ENCODE measurements at regions of chr5 and their contacts with region 1.

Region 1: DNA sequence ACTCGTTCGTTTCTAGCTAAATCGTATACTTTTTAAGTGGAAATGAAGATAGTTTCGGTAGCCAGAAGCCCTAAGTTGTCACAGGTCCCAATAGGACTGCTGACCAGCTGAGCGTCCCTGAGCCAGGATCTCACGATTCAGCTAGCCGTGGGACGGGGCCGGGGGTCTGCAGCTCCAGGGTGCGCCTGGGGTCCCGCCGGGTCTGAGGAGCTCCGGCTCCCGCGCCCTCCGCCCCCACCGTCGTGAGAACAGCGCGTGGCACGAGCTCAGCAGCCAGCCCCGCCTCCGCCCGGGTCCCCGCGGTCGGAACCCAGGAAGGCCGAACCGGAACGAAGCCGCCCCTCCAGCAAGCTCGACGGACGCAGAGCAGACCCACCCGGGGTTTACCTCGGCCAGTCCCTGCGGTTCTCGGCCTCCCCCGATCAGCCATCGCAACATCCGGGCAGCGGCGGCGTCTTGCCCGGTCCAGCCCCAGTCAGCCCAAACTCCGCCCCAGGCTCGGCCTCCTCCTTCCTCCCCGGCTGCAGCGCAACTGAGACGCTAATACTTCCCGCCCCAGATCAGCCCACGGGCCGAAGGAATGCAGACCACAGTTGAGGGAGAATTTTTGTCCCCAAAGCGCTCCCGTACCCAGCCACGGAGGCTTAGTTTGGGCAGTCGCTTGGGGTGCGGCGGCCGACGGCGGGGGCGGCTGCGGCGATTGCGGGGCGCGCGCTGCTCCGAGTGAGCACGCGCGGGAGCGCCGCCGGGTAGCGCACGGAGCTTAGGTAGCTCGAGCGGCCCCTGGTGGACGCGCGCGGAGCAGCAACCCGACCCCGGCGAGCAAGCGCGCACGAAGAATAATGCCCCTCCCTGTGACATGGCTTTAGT is at the start of gene WDR41:
- DNase-seq: peak in 1 of 2 donors; percentile 96
- H3K4me3 ChIP-seq: peak within 1 kb of the TSS; percentile 83 to 86
- H3K27ac ChIP-seq: peak within 1 kb of the TSS; percentile 96
- H3K4me1 ChIP-seq: peaks cover 22% of the 10 kb centered on the region
- H3K27me3 ChIP-seq: no peaks in the 10 kb centered on the region
- CTCF ChIP-seq: peak; percentile 74 to 93 (median 90)
- POLR2A ChIP-seq: peak in 1 of 2 donors; percentile 23
- total RNA-seq, gene WDR41: 40.3 TPM

Region 2: GRCh38 chr5:77086689-77087483 is 405.1 kb before region 1 on chr5 and contains the start of gene ZBED3:
- intact Hi-C with region 1: loop called (anchors 5 kb)
- DNase-seq: peak in 1 of 2 donors; percentile 92
- H3K4me3 ChIP-seq: peak within 1 kb of the TSS; percentile 56 to 79
- H3K27ac ChIP-seq: peak within 1 kb of the TSS; percentile 83
- H3K4me1 ChIP-seq: peaks cover 17% of the 10 kb centered on the region
- H3K27me3 ChIP-seq: no peaks in the 10 kb centered on the region
- CTCF ChIP-seq: no peak
- POLR2A ChIP-seq: no peak
- total RNA-seq, gene ZBED3: 9.1 TPM

Region 3: DNA sequence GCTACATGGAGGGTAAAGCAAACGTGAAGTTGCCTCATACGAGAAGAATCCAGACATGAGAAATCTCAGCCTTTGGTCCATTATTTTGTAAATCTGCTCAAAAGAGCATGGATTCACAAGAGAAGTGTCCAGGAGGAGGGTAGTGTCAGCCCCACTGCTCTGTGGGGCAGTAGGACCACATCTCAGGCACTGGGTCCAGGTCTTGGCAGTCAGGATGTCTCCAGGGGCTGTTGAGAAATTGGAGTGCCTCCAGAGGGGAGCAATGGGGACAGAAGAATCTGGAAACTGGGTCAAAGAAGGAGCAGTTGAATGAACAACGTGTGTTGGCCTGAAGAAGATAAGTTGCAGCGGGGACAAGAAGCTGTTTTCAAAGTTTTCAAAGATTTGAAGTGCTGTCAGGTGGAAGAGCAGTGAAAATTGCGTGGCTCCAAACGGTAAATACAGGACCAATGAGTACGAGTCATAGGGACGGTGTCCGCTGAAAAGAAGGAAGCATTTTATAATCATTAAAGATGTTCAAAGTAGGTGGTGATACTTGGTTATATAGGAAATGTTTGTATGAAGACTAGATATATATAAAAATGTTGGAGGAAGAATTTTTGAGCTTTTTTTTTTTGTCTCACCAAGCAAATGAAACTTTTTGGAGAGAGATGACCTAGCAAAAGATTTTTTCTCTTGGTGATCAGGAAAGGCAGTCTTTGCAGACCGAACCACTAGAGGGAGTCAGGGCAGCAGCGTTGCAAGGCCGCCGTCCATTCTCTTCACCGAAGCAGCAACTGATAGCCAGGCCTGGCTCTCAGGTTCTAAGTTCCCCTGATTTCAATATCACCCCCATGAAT is 347.8 kb before region 1 on chr5:
- intact Hi-C with region 1: loop called (anchors 10 kb)
- DNase-seq: no peak
- H3K4me3 ChIP-seq: no peak overlapping the region
- H3K27ac ChIP-seq: no peak overlapping the region
- H3K4me1 ChIP-seq: no peaks in the 10 kb centered on the region
- H3K27me3 ChIP-seq: no peaks in the 10 kb centered on the region
- CTCF ChIP-seq: peak; percentile 15 to 66 (median 43)
- POLR2A ChIP-seq: no peak

Region 4: DNA sequence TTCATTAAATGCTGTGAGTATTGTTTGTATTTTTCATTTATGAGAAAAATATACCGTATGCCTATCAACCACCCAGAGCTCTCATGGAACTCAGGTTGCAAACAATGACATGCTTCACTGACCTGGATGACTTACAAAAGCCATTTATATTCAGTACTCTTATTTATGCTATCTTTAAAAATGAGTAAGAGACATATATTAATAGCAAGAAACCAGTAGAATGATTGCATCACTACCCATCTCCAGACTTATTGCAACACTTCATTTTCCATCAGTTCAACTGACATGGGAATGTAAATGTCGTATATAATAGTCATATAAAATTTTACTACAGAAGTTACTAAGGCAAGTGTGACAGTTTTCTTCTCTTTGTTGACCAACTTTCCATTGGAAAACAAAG is 77.4 kb after region 1 on chr5:
- intact Hi-C with region 1: no loop called
- DNase-seq: no peak
- H3K4me3 ChIP-seq: no peak overlapping the region
- H3K27ac ChIP-seq: no peak overlapping the region
- H3K4me1 ChIP-seq: no peaks in the 10 kb centered on the region
- H3K27me3 ChIP-seq: no peaks in the 10 kb centered on the region
- CTCF ChIP-seq: no peak
- POLR2A ChIP-seq: no peak